Caco-2 (cell line): ENCODE measurements at regions of chr7 and their contacts with region 1.

Region 1: GRCh38 chr7:2680792-2681490 is 7.1 kb upstream of the AMZ1 start:
- DNase-seq: peak; percentile 76 to 82
- H3K4me3 ChIP-seq: no peak overlapping the region
- H3K4me3 Mint-ChIP-seq: no peak overlapping the region
- H3K27ac Mint-ChIP-seq: no peak overlapping the region
- H3K4me1 ChIP-seq: no peaks in the 10 kb centered on the region
- H3K4me1 Mint-ChIP-seq: peaks cover 6% of the 10 kb centered on the region
- H3K27me3 ChIP-seq: no peaks in the 10 kb centered on the region
- H3K27me3 Mint-ChIP-seq: peaks cover 5% of the 10 kb centered on the region
- CTCF ChIP-seq: peak; percentile 81

Region 2: DNA sequence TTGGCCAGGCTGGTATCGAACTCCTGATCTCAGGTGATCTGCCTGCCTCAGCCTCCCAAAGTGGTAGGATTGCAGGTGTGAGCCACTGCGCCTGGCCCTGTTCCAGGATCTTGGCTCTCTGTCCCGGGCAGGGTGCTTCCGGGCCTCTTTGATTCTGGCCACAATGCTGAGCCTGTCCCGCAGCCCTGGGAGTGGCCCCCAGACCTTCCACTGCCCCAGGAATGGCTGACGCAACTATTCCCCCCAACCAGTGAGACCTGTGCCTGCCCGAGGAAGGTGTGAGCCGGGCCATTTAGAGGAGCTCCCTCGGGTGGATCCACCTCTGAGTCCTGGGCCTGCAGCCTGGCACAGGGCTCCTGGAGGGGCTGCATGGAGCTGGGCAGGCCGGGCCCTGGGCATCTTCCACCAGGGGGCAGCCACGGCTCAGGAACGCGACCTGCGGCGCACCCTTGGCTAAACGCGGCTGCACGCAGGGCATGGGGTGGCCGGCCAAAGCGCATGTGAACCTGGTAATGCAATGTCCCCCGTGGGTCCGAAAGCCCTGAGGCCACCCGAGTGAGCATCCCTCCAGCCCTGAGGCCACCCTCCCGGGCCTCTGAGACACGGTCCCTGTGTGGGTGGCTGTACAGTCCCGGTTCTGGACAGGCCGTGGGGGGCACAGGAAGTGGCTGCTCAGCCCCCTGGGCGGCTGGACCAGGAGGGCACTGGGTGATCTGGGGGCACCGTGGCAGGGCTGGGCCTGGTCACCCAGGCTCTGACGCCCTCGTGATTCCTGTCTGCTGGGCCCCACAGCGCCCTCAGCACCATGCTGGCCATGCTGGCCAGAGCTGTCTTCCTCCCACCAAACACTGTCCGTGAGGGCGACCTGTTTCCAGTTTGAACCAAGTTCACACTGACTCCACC is 229.5 kb before region 1 on chr7:
- CTCF ChIA-PET with region 1: interaction called, 4 read pairs
- POLR2A ChIA-PET with region 1: no interaction called
- intact Hi-C with region 1: loop called (anchors 5 kb)
- DNase-seq: peak; percentile 85 to 92
- H3K4me3 ChIP-seq: peak overlapping the region; percentile 26
- H3K4me3 Mint-ChIP-seq: peak overlapping the region; percentile 70
- H3K27ac Mint-ChIP-seq: peak overlapping the region; percentile 72
- H3K4me1 ChIP-seq: peaks cover 6% of the 10 kb centered on the region
- H3K4me1 Mint-ChIP-seq: no peaks in the 10 kb centered on the region
- H3K27me3 ChIP-seq: no peaks in the 10 kb centered on the region
- H3K27me3 Mint-ChIP-seq: no peaks in the 10 kb centered on the region
- CTCF ChIP-seq: peak; percentile 89 to 93

Region 3: GRCh38 chr7:2567679-2568278 is 113.2 kb before region 1 on chr7:
- CTCF ChIA-PET with region 1: no interaction called
- POLR2A ChIA-PET with region 1: no interaction called
- intact Hi-C with region 1: loop called (anchors 1 kb)
- DNase-seq: peak in 1 of 2 experiments; percentile 23
- H3K4me3 ChIP-seq: no peak overlapping the region
- H3K4me3 Mint-ChIP-seq: no peak overlapping the region
- H3K27ac Mint-ChIP-seq: no peak overlapping the region
- H3K4me1 ChIP-seq: peaks cover 11% of the 10 kb centered on the region; the same call in 1 of the 2 replicates
- H3K4me1 Mint-ChIP-seq: no peaks in the 10 kb centered on the region
- H3K27me3 ChIP-seq: no peaks in the 10 kb centered on the region
- H3K27me3 Mint-ChIP-seq: no peaks in the 10 kb centered on the region
- CTCF ChIP-seq: peak; percentile 38 to 70

Region 4: GRCh38 chr7:2608921-2609411 is 72.0 kb before region 1 on chr7:
- CTCF ChIA-PET with region 1: interaction called, 3 read pairs
- POLR2A ChIA-PET with region 1: no interaction called
- intact Hi-C with region 1: loop called (anchors 5 kb)
- DNase-seq: peak in 1 of 2 experiments; percentile 36
- H3K4me3 ChIP-seq: no peak overlapping the region
- H3K4me3 Mint-ChIP-seq: no peak overlapping the region
- H3K27ac Mint-ChIP-seq: no peak overlapping the region
- H3K4me1 ChIP-seq: no peaks in the 10 kb centered on the region
- H3K4me1 Mint-ChIP-seq: peaks cover 5% of the 10 kb centered on the region
- H3K27me3 ChIP-seq: no peaks in the 10 kb centered on the region
- H3K27me3 Mint-ChIP-seq: no peaks in the 10 kb centered on the region
- CTCF ChIP-seq: peak; percentile 20 to 25

Region 5: DNA sequence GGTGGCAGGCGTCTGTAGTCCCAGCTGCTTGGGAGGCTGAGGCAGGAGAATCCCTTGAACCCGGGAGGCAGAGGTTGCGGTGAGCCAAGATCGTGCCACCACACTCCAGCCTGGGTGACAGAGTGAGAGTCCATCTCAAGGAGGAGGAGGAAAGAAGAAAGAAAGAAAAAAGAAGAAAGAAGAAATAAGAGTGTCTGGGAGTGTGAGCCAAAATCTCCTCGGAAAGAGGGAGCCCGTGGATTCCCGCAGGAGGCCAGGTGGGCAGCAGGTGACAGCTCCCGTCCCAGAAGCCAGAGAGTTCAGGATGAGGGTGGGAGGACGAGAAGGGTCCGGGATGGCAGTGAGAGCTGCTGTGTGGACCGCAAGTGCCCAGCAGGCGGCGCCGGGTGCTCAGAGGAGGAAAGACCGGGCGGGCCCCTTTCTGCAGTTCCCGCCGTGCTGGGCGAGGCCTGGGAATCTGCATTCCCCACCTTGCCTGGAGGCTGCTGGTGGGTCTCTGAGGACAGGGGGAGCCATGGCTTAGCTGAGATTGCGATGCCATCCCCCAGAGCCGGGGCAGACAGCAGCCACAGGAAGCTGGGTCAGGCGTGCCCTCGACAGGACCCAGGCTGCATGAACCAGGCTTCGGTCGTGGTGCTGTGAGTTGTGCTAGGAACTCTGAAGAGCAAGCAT is 10.1 kb before region 1 on chr7:
- CTCF ChIA-PET with region 1: interaction called, 13 read pairs
- POLR2A ChIA-PET with region 1: no interaction called
- intact Hi-C with region 1: loop called (anchors 1 kb)
- DNase-seq: peak; percentile 70 to 82
- H3K4me3 ChIP-seq: no peak overlapping the region
- H3K4me3 Mint-ChIP-seq: no peak overlapping the region
- H3K27ac Mint-ChIP-seq: no peak overlapping the region
- H3K4me1 ChIP-seq: no peaks in the 10 kb centered on the region
- H3K4me1 Mint-ChIP-seq: peaks cover 7% of the 10 kb centered on the region
- H3K27me3 ChIP-seq: no peaks in the 10 kb centered on the region
- H3K27me3 Mint-ChIP-seq: peaks cover 3% of the 10 kb centered on the region
- CTCF ChIP-seq: peak; percentile 85 to 90